ENCODE measurements at regions of chr18 and their contacts with region 1.

Region 1: DNA sequence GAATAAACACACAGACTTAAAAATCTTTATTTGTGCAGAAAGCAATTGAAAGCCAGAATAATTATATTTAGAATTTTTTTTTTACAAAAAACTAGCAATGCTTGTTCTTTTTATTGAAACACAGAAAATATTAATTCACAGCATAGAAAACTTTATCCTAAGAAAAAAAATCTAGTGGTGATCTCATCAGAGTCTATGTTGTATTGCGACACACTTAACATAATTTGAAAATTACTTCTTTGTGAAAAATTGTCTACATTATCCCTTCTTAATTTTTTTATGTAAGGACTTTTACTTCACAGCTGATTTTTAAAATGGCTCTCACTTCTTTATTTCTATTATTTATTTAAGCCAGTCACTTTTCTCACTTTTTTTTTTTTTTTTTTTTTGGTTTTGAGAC is 103.4 kb downstream of the LDLRAD4 start:
- DNase-seq: no peak
- ATAC-seq: no peak
- H3K4me3 ChIP-seq: no peak overlapping the region
- H3K27ac ChIP-seq: no peak overlapping the region
- H3K4me1 ChIP-seq: no peaks in the 10 kb centered on the region
- H3K27me3 ChIP-seq: no peaks in the 10 kb centered on the region
- CTCF ChIP-seq: no peak
- POLR2A ChIP-seq: no peak
- RAD21 ChIP-seq: no peak

Region 2: DNA sequence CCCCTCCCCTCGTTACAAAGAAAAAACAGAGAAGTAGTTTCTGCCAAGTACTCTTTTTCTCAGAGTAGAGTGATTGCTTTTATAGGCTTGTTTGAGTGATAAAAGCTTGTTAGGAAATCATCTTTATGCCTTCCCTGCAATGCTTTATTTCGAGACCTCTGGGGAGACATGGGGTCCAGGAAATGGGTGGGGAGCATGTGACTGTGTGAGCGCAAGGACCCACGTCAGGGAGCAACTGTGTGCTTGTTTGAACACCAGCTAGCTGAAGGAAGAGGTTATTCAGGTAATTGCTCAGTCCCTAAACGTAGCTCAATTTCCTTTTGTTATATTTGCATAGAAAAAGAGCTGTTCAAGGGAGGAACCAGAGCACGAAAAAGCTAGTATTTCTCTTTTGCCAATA is 217.1 kb after region 1 on chr18:
- CTCF ChIA-PET with region 1: no interaction called
- POLR2A ChIA-PET with region 1: interaction called, 14 read pairs
- dilution Hi-C with region 1: no loop called
- in situ Hi-C with region 1: no loop called
- intact Hi-C with region 1: no loop called
- DNase-seq: no peak
- ATAC-seq: no peak
- H3K4me3 ChIP-seq: no peak overlapping the region
- H3K27ac ChIP-seq: no peak overlapping the region
- H3K4me1 ChIP-seq: no peaks in the 10 kb centered on the region
- H3K27me3 ChIP-seq: peaks cover 2% of the 10 kb centered on the region
- CTCF ChIP-seq: no peak
- POLR2A ChIP-seq: no peak
- RAD21 ChIP-seq: no peak

Measured in IMR-90 (cell line).